ENCODE measurements at regions of chr14 and their contacts with region 1.

Region 1: GRCh38 chr14:94036313-94037050 is 10.3 kb downstream of the OTUB2 start:
- DNase-seq: peak; percentile 88
- H3K4me3 Mint-ChIP-seq: no peak overlapping the region
- H3K27ac Mint-ChIP-seq: no peak overlapping the region
- H3K4me1 Mint-ChIP-seq: peaks cover 5% of the 10 kb centered on the region
- H3K27me3 Mint-ChIP-seq: peaks cover 10% of the 10 kb centered on the region

Region 2: DNA sequence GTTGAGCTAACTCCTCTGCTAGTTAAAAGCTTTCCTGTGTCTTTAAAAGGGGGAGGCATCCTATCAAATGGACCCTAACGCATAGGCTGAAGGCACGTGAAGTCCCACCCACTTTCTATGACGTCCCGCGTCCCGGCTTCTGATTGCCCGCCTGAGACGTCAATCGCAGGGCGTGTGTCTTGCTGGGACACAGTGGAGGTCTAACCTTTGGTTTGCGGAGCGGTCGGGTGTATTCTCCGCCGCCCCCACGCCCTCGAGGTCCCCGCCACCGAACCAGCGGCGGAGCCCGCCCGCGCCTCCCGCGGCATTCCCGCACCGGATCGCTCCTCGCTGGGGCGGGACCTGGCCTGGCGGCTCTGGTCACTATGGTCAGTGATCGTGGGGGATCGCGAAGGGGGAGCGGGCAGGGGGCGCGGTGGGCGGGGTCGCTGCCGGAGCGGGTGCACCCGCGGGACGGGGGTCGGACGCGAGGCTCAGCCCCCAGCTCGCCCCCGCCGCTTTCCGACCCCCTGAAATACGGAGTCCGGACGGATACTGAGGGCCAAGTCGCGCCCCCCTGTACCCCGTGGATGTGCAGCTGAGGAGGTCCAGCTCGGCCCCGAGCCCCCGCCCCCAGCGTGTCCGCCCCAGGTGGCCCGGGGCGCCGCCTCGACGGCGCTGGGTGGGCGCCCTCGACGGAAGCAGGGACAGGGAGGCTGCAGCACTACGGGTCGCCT is 10.2 kb before region 1 on chr14 and contains the start of gene OTUB2:
- CTCF ChIA-PET with region 1: interaction called, 44 read pairs
- DNase-seq: peak; percentile 98
- H3K4me3 Mint-ChIP-seq: peak within 1 kb of the TSS; percentile 72
- H3K27ac Mint-ChIP-seq: peak within 1 kb of the TSS; percentile 66
- H3K4me1 Mint-ChIP-seq: peaks cover 62% of the 10 kb centered on the region
- H3K27me3 Mint-ChIP-seq: peaks cover 19% of the 10 kb centered on the region

Region 3: GRCh38 chr14:94056579-94057308 is 20.3 kb after region 1 on chr14:
- CTCF ChIA-PET with region 1: interaction called, 39 read pairs
- DNase-seq: peak; percentile 54
- H3K4me3 Mint-ChIP-seq: no peak overlapping the region
- H3K27ac Mint-ChIP-seq: peak overlapping the region; percentile 88
- H3K4me1 Mint-ChIP-seq: peaks cover 60% of the 10 kb centered on the region
- H3K27me3 Mint-ChIP-seq: no peaks in the 10 kb centered on the region

Region 4: DNA sequence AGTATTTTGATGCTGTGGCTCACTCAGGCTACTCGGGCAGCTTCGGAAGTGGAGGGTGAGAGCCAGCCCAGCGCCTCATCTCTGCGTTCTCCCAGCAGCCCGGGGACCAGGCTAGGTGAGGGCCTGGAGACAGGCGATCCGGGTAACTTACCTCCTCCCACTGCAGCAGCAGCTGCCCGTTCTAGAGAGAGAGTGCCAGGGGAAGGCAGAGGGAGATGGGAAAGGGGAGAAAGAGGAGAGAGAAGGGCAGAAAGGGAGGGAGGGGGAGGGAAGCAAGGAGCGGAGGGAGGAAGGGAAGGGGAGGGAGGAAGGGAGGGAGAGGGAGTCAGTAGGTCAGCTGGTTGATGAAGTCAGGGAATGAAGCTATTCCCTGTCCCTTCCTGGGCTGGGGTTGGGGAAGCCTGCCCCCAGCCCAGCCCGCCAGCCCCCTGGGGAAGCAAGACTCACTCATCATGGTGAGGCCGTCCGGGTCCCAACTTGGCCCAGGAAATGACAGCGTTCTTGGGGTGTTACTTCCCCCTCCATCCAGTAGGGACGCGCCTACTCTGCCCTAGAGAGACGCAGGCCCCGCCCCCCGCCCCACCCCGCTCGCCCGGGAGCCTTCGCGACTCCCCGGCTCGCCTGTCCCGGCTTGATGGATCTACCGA is 92.8 kb after region 1 on chr14 and contains the start of gene IFI27L2:
- CTCF ChIA-PET with region 1: interaction called, 66 read pairs
- DNase-seq: peak; percentile 86
- H3K4me3 Mint-ChIP-seq: peak within 1 kb of the TSS; percentile 85
- H3K27ac Mint-ChIP-seq: peak within 1 kb of the TSS; percentile 88
- H3K4me1 Mint-ChIP-seq: peaks cover 24% of the 10 kb centered on the region
- H3K27me3 Mint-ChIP-seq: peaks cover 11% of the 10 kb centered on the region

Region 5: DNA sequence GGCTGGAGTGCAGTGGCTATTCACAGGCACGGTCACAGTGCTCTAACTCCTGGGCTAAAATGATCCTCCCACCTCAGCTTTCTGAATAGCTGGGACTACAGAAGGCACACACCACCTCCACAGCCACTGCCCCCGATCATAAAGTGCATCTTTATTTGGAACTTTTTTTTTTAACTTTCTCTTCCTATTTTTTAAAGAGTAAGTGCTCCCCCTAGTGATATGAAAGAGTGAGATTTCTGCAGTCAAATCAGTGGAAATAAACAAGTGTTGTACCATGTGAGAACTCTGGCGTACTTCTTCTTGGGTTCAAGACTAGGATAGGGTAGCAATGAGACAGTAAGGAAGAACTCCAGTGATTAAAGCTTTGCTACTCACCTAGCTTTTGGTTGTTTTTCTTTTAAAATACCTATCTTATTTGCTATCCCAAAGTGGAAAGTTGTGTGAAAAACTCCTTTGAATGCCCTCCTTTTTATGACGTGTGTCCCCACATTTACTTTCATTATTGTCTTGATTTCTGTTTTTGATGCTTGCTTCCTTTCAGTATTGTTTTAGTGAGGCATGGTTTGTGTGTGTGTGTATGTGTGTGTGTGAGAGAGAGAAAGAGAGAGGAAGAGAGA is 144.3 kb after region 1 on chr14:
- CTCF ChIA-PET with region 1: interaction called, 21 read pairs
- DNase-seq: peak; percentile 41
- H3K4me3 Mint-ChIP-seq: peak overlapping the region; percentile 44
- H3K27ac Mint-ChIP-seq: peak overlapping the region; percentile 51
- H3K4me1 Mint-ChIP-seq: peaks cover 18% of the 10 kb centered on the region
- H3K27me3 Mint-ChIP-seq: peaks cover 16% of the 10 kb centered on the region

Measured in activated naive CD4-positive, alpha-beta T cell treated with anti-CD3 and anti-CD28 coated beads, Interleukin-2, amount 10 ng/mL, durations not matched to agents 7 days and 5 days (primary cell).